Activated B cell treated with CpG ODN at 0.5 μM for 24 hours (primary cell): ENCODE measurements at regions of chr2 and their contacts with region 1.

Region 1: DNA sequence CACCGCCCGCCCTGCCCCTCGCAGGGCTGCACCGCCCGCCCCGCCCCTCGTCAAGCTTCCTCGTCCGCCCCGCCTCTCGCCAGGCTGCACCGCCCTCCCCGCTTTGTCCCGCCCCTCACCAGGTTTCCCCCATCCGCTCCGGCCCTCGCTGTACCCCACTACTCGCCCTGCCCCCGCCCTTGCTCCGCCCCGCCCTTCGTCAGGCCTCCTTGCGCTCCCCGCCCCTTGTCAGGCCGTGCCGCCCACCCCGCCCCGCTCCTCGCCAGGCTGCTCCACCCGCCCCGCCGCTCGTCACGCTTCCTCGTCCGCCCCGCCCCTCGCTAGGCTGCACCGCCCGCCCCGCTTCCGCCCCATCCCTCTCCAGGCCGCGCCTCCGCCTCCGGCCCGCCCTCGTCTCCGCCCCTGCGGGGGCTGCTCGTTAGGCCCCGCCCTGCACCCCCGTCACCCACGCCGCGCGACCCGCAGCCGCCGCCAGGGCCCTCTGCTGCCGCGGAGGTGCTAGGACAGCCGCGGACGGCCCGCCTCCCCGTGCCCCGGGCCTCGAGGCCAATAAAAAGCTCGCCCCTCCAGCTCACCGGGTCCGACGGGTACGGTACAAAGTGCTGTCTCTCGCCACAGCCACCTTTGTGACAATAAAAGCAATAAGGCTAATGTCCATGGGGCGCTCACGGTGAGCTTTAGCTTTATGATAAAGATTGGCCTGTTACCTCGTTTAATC is 574 bp upstream of the DNPEP start:
- DNase-seq: peak; percentile 99
- ATAC-seq: peak; percentile 79
- H3K4me3 Mint-ChIP-seq: peak overlapping the region; percentile 71
- H3K27ac Mint-ChIP-seq: peak overlapping the region; percentile 84
- H3K4me1 Mint-ChIP-seq: peaks cover 16% of the 10 kb centered on the region
- H3K27me3 Mint-ChIP-seq: peaks cover 4% of the 10 kb centered on the region
- CTCF ChIP-seq: no peak

Region 2: GRCh38 chr2:218216674-218217359 is 1171.5 kb before region 1 on chr2 and contains the start of gene ARPC2:
- CTCF ChIA-PET with region 1: no interaction called
- POLR2A ChIA-PET with region 1: interaction called, 4 read pairs
- intact Hi-C with region 1: loop called (anchors 2 kb)
- DNase-seq: peak; percentile 95
- ATAC-seq: peak; percentile 63
- H3K4me3 Mint-ChIP-seq: peak within 1 kb of the TSS; percentile 98
- H3K27ac Mint-ChIP-seq: peak within 1 kb of the TSS; percentile 99
- H3K4me1 Mint-ChIP-seq: peaks cover 45% of the 10 kb centered on the region
- H3K27me3 Mint-ChIP-seq: no peaks in the 10 kb centered on the region
- CTCF ChIP-seq: no peak
- total RNA-seq, gene ARPC2: 711 and 737 TPM in 2 replicates

Region 3: DNA sequence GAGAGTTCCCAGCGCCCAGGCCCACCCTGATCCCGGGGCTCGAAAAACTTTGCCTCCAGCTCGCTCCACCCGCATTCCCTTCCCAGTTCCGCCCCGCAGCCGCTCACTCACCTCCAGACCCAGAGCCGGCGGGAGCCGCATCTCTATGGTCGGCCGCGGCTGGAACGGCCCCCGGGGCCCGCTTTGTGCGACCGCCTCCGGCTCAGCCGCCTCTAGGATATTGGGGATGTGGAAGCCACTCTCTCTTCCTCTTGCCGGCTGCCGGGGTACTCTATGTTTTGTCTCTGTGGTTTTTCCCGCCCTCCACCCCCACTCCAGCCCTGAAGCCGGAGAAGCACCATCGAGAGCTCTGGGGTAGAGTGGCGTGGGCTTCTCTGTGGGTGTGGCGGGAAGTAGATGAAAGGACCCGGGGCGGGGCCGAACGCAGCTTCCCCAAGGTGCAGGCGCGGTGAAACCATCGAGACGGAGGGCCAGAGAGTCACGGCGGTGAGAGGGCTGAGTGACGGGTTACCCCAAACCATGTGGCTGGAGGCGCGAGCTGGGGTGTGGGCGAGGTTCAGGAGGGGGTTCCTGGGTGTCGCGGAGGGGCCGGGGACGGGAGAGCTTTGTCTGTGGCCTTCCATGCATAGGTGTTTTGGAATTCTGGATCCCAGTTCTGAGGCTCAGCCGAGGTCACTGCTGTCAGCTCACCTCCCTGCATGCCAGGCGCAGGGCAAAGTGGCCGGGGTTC is 728.9 kb before region 1 on chr2 and contains the starts of genes BCS1L and ZNF142:
- CTCF ChIA-PET with region 1: no interaction called
- POLR2A ChIA-PET with region 1: interaction called, 14 read pairs
- intact Hi-C with region 1: no loop called
- DNase-seq: peak; percentile 85
- ATAC-seq: peak; percentile 96
- H3K4me3 Mint-ChIP-seq: peak within 1 kb of the TSS; percentile 99
- H3K27ac Mint-ChIP-seq: peak within 1 kb of the TSS; percentile 93
- H3K4me1 Mint-ChIP-seq: peaks cover 31% of the 10 kb centered on the region
- H3K27me3 Mint-ChIP-seq: no peaks in the 10 kb centered on the region
- CTCF ChIP-seq: no peak
- total RNA-seq, gene BCS1L: 66.9 and 75.1 TPM in 2 replicates
- total RNA-seq, gene ZNF142: 44.9 and 63.6 TPM in 2 replicates

Region 4: GRCh38 chr2:218908721-218909619 is 479.3 kb before region 1 on chr2:
- CTCF ChIA-PET with region 1: no interaction called
- POLR2A ChIA-PET with region 1: no interaction called
- intact Hi-C with region 1: loop called (anchors 1 kb)
- DNase-seq: peak; percentile 82
- ATAC-seq: peak; percentile 98
- H3K4me3 Mint-ChIP-seq: peak overlapping the region; percentile 84
- H3K27ac Mint-ChIP-seq: peak overlapping the region; percentile 59
- H3K4me1 Mint-ChIP-seq: peaks cover 9% of the 10 kb centered on the region
- H3K27me3 Mint-ChIP-seq: peaks cover 12% of the 10 kb centered on the region
- CTCF ChIP-seq: no peak

Region 5: GRCh38 chr2:219229305-219230058 is 158.8 kb before region 1 on chr2 and contains the starts of genes ANKZF1 and ATG9A:
- CTCF ChIA-PET with region 1: no interaction called
- POLR2A ChIA-PET with region 1: interaction called, 9 read pairs
- intact Hi-C with region 1: loop called (anchors 1 kb)
- DNase-seq: peak; percentile 90
- ATAC-seq: peak; percentile 97
- H3K4me3 Mint-ChIP-seq: peak within 1 kb of the TSS; percentile 96
- H3K27ac Mint-ChIP-seq: peak within 1 kb of the TSS; percentile 95
- H3K4me1 Mint-ChIP-seq: peaks cover 43% of the 10 kb centered on the region
- H3K27me3 Mint-ChIP-seq: no peaks in the 10 kb centered on the region
- CTCF ChIP-seq: no peak
- total RNA-seq, gene ANKZF1: 96.0 and 105 TPM in 2 replicates
- total RNA-seq, gene ATG9A: 28.3 and 38.3 TPM in 2 replicates

Region 6: DNA sequence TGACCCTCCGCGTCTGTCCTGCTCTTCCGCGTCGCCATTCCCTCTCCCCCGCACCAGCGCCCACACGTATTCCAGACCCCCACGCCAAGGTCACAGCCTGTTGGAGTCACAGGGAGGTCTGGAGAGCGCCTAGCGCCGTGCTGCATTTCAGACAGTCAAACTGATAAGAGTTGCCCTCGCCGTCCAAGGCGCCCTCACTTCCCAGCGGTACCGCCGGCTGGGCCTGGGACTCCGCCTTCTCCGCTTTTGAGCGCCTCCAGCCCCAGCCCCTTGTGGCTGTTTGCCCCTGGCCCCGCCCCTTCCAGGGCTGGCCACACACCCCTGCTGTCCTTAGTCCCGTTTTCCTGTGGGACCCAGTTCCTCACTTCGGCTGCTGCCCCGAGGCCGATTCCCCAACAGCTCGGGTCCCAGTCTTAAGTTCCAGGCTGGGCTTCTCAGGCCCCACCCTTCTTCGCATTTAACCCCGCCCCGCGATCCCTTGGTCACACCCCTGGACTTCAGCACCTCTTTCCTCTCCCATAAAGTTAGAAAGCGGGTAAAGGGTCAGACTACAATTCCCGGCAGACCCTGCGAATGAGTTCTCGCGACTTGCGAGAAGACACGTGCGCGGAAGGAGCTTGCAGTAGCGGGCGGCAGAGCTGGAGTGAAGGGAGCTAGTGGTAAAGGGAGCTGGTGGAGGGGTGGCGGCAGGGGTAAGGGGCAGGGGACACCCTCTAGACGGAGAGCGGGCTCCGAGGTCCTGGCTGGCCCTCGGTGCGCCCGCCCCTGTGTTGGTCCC is 110.2 kb after region 1 on chr2 and contains the start of gene GMPPA:
- CTCF ChIA-PET with region 1: interaction called, 4 read pairs
- POLR2A ChIA-PET with region 1: interaction called, 20 read pairs
- intact Hi-C with region 1: loop called (anchors 1 kb)
- DNase-seq: peak; percentile 86
- ATAC-seq: peak; percentile 94
- H3K4me3 Mint-ChIP-seq: peak within 1 kb of the TSS; percentile 98
- H3K27ac Mint-ChIP-seq: peak within 1 kb of the TSS; percentile 86
- H3K4me1 Mint-ChIP-seq: peaks cover 34% of the 10 kb centered on the region
- H3K27me3 Mint-ChIP-seq: peaks cover 28% of the 10 kb centered on the region
- CTCF ChIP-seq: no peak
- total RNA-seq, gene GMPPA: 32.9 and 33.0 TPM in 2 replicates

Region 7: DNA sequence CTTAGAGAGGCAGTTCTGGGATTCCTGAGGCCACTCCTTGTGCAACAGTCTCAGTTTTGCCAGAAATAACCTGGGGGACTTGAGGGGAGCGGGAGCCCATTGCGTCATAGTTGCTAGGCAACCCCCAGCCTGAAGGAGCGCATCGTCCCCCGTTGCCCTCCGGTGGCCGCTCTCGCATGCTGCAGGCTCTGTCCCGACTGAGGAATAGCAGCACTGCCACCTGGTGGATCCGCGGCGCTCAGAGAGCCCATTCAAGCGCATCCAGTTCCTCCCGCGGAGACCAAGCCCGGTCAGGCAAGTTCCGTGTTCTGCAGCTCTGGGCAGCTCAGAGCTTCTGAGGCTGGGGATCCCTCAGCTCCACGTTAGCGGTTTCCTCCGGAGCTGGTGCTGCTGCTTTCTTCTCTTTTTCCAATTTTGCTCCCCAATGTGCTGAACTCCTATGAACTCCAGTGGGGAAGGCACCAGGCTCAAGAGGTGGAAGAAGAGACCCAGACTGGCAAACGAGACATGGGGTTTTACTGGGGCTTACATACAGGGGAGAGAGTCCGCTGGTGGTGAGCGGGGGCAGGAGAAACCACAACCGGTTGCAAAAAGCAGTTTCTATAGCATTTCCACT is 254.3 kb after region 1 on chr2:
- CTCF ChIA-PET with region 1: no interaction called
- POLR2A ChIA-PET with region 1: no interaction called
- intact Hi-C with region 1: loop called (anchors 5 kb)
- DNase-seq: peak; percentile 80
- ATAC-seq: peak; percentile 100
- H3K4me3 Mint-ChIP-seq: peak overlapping the region; percentile 13
- H3K27ac Mint-ChIP-seq: peak overlapping the region; percentile 13
- H3K4me1 Mint-ChIP-seq: peaks cover 15% of the 10 kb centered on the region
- H3K27me3 Mint-ChIP-seq: peaks cover 20% of the 10 kb centered on the region
- CTCF ChIP-seq: peak; percentile 77

Region 8: GRCh38 chr2:220247588-220248350 is 859.5 kb after region 1 on chr2:
- CTCF ChIA-PET with region 1: no interaction called
- POLR2A ChIA-PET with region 1: no interaction called
- intact Hi-C with region 1: no loop called
- DNase-seq: no peak
- ATAC-seq: no peak
- H3K4me3 Mint-ChIP-seq: no peak overlapping the region
- H3K27ac Mint-ChIP-seq: no peak overlapping the region
- H3K4me1 Mint-ChIP-seq: no peaks in the 10 kb centered on the region
- H3K27me3 Mint-ChIP-seq: no peaks in the 10 kb centered on the region
- CTCF ChIP-seq: no peak